Dendritic cell treated with granulocyte-macrophage colony-stimulating factor and Interleukin-4, amounts not matched to agents 40 ng/mL and 50 ng/mL, for 4 days (primary cell): ENCODE measurements at regions of chr3 and their contacts with region 1.

Region 1: GRCh38 chr3:186849374-186849975 is 7.0 kb downstream of the ADIPOQ start:
- H3K4me3 Mint-ChIP-seq: no peak overlapping the region
- H3K27ac Mint-ChIP-seq: no peak overlapping the region
- H3K4me1 Mint-ChIP-seq: peaks cover 47% of the 10 kb centered on the region
- H3K27me3 Mint-ChIP-seq: peaks cover 4% of the 10 kb centered on the region

Region 2: DNA sequence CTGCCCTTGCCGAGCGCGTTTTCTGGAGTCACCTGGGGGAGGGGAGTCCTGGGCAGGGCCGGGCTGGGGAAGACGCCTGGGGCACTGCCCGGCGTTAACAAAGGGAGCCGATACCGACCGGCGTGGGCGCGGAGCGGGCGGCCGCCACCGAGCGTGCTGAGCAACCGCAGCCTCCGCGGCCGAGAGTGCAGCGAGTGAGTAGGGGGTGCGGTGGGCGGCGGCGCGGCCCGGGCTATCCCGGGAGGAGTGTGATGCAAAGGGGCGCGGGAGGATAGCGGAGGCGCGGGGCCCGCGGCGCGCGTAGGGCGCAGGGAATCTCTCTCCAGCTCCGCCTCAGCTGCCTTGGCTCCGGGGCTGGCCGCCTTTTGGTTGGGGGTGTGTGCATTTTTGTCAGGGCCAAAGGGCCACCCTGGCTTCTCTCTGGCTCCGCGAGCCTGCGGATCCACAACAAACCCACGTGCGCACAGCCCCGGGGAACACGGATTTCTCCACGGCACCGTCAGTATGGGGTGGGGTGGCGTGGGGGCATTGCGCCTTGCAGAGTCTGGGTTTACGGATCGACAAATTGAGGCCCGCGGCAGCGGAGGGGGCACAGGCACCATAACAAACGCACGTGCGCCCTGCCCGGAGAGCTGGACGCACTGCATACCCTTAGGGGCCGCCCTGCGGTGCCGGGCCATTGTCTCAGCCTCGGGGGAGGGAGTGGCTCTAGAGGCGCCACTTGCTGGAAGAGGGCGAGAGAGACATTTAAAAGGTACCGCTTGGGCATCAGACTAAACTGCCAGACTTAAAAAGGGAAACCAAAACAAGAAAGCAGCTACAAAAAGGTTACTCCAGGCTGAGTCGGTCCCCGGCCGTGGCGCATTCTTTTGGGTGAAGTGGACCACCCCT is 81.4 kb after region 1 on chr3:
- intact Hi-C with region 1: loop called (anchors 5 kb)
- H3K4me3 Mint-ChIP-seq: peak overlapping the region; percentile 96
- H3K27ac Mint-ChIP-seq: peak overlapping the region; percentile 85
- H3K4me1 Mint-ChIP-seq: peaks cover 57% of the 10 kb centered on the region
- H3K27me3 Mint-ChIP-seq: peaks cover 2% of the 10 kb centered on the region

Region 3: DNA sequence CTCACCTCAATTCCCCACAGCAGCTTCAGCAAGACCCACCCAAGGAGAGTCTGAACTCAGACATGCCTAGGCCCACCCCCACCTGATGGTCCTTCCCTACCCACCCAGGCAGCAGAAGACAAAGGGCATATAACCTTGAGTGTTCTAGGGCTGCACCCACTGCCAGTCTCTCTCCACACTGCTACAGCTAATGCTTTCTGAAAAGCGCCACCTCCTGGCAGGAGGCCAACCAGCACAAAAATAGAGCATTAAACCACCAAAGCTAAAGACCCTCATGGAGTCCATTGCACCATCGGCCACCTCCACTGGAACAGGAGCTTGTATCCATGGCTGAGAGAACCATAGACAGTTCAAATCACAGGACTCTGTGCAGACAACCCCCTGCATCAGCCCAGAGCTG is 301.1 kb after region 1 on chr3:
- intact Hi-C with region 1: loop called (anchors 5 kb)
- H3K4me3 Mint-ChIP-seq: no peak overlapping the region
- H3K27ac Mint-ChIP-seq: no peak overlapping the region
- H3K4me1 Mint-ChIP-seq: no peaks in the 10 kb centered on the region
- H3K27me3 Mint-ChIP-seq: peaks cover 7% of the 10 kb centered on the region